ENCODE measurements at regions of chr1 and their contacts with region 1.

Region 1: GRCh38 chr1:192477630-192478029 is 97.9 kb upstream of the RGS1 start:
- DNase-seq: no peak
- H3K4me3 ChIP-seq: no peak overlapping the region
- H3K27ac ChIP-seq: no peak overlapping the region
- H3K4me1 ChIP-seq: no peaks in the 10 kb centered on the region
- H3K27me3 ChIP-seq: no peaks in the 10 kb centered on the region
- CTCF ChIP-seq: peak; percentile 39 to 57 (median 47)
- POLR2A ChIP-seq: no peak

Region 2: GRCh38 chr1:192808518-192809306 is 331.1 kb after region 1 on chr1 and contains the start of gene RGS2:
- intact Hi-C with region 1: loop called (anchors 5 kb)
- DNase-seq: peak in 1 of 2 donors; percentile 95
- H3K4me3 ChIP-seq: peak within 1 kb of the TSS; percentile 65 to 72
- H3K27ac ChIP-seq: peak within 1 kb of the TSS; percentile 87
- H3K4me1 ChIP-seq: peaks cover 5% of the 10 kb centered on the region
- H3K27me3 ChIP-seq: no peaks in the 10 kb centered on the region
- CTCF ChIP-seq: peak in 2 of 3 experiments; percentile 21 to 29
- POLR2A ChIP-seq: peak; percentile 86 to 99
- total RNA-seq, gene RGS2: 100 TPM

Region 3: DNA sequence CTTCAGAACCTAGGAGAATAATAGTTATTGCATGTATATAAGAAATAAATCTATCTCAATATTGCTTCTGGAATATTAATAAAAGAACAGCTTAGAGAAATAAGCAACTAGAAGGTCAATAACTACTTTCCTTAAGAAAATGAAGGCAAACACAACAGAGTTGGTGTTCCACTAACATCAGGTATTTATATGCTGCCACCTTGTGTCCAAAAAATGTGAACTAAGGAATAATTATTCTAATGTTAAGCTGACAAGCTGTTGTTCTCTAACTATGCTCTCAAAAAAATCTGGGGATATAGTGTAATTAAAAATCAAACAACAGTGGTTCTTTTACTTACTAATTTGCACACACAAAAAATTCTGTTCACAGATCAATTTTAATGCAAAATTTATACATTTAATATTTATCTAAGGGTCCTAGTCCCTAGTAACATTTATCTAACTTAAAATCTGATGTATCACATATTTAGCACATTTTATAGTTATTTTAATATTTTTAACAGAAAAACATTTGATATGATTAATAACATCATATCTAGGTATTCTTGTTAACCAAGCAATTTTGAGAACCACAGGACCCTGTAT is 541.9 kb after region 1 on chr1:
- intact Hi-C with region 1: loop called (anchors 10 kb)
- DNase-seq: no peak
- H3K4me3 ChIP-seq: no peak overlapping the region
- H3K27ac ChIP-seq: no peak overlapping the region
- H3K4me1 ChIP-seq: no peaks in the 10 kb centered on the region
- H3K27me3 ChIP-seq: no peaks in the 10 kb centered on the region
- CTCF ChIP-seq: peak; percentile 17 to 61 (median 48)
- POLR2A ChIP-seq: no peak

Measured in vagina (tissue), 2 donors.